ENCODE measurements at regions of chr5 and their contacts with region 1.

Region 1: GRCh38 chr5:96876292-96876850 is at the start of gene ERAP2:
- DNase-seq: peak; percentile 14 to 51
- H3K4me3 ChIP-seq: peak within 1 kb of the TSS; percentile 33
- H3K4me1 ChIP-seq: peaks cover 5% of the 10 kb centered on the region
- H3K27me3 ChIP-seq: no peaks in the 10 kb centered on the region

Region 2: DNA sequence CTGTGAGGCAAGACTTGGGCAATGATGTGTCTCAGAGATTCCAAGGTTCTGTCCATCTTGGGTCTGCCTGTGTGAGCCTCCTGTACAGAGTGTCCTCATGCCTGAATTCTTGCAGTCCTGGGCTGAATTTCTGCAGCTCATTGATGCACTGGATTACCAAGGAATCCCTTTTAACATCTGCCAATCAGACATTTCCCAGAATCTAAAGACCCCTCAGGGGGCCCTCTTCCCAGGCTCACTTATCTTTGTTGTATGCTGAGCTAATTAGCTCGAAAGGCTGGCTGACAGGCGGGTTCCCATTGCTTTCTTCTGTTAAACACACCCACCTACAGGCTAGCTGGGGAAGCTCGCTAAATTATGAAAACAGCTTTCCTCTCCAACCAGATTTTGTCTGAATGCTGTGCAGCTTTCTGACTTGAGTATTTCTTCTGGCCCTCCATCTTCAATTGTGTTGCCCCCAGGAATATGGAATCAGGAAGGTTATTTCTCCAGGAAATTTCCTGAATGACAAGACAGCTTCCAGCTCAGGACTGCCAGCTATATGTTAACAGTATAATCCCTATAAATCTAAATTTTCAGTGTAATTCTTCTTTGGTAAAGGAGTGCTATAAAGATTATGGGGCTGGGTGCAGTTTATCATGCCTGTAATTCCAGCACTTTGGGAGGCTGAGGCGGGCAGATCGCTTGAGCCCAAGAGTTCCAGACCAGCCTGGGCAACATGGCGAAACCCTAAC is 266.3 kb after region 1 on chr5 and contains the start of gene LIX1:
- in situ Hi-C with region 1: loop called (anchors 10 kb)
- DNase-seq: peak; percentile 74
- H3K4me3 ChIP-seq: no peak within 1 kb of the TSS
- H3K4me1 ChIP-seq: peaks cover 10% of the 10 kb centered on the region
- H3K27me3 ChIP-seq: no peaks in the 10 kb centered on the region